ENCODE measurements at regions of chr1 and their contacts with region 1.

Region 1: DNA sequence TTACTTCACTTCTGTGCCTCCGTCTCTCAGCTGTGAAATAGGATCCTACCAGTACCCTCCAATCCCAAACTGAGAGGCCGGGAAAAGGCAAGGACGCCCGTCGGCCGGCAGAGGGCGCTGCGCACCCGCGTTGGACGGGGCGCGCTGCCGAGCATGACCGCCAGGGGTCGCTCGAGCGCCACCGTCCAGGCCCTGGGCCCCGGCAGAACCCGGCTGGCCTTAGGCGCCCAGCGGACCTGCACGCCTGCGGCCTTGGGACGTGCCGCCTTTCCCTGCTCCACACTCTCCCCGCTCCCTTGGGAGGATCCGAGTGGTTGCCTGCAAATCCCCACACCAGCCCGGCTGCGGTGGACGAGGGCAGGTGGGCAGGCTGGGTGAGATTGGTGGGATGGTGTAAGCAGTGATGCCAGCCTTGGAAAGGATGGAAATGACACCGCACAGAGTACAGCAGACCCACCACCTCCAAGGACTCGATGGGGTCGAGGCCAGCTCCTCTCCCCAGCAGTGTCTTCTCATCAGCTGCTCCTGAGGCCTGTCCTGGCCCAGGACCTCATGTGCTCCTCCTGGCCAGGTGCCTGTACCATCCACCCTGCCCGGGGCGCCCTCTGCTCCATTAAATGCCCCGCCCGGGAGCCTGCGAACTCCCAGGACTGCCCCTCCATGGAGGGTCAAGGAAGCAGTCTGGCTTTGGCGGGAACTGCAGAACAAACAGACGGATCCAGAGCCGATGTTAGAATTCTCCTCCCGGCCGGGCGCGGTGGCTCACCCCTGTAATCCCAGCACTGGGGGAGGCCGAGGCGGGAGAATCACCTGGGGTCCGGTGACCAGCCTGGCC is 47.4 kb upstream of the LBR start:
- DNase-seq: peak; percentile 93

Region 2: GRCh38 chr1:225209153-225209552 is 266.1 kb before region 1 on chr1:
- intact Hi-C with region 1: no loop called
- DNase-seq: no peak

Region 3: GRCh38 chr1:225772323-225772768 is 297.1 kb after region 1 on chr1:
- intact Hi-C with region 1: loop called (anchors 1 kb)
- DNase-seq: peak; percentile 89

Region 4: DNA sequence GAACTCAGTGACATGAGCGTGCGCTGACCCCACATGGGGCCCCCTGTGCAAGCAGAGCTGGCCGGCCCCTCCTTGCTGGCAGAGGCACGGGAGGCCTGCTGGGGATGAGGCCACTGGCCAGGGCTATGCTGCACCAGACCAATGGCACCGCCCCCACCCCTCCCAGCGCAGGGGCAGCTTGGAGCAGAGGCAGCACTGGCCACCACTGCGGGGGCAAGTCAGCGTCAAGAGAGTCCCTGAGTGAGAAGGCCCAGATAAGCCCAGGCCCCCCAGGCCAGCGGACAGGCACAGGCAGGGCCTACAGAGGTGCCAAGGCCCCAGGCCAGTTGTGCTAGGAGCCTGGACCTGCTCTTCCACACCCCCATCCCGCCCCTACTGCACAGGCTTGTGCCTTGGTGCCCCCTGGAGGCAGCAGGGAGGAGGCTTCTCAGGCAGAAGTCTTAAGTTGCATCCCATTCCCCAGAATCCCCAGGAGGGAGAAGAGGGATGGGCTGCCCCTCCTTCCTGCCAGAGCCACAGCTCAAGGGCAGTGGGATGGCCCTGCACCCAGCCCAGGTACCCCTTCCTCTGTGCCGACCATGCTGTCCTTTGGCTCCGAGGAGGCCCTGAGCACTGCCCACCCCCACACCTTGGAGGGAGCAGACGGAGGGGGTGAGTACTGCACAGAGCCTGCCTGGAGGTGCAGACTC is 370.5 kb after region 1 on chr1:
- intact Hi-C with region 1: loop called (anchors 2 kb)
- DNase-seq: peak; percentile 84

Region 5: GRCh38 chr1:225911191-225912130 is 436.3 kb after region 1 on chr1:
- intact Hi-C with region 1: loop called (anchors 1 kb)
- DNase-seq: peak; percentile 81

Measured in cardiac septum (tissue), 1 donor.